ENCODE measurements at regions of chrX and their contacts with region 1.

Region 1: DNA sequence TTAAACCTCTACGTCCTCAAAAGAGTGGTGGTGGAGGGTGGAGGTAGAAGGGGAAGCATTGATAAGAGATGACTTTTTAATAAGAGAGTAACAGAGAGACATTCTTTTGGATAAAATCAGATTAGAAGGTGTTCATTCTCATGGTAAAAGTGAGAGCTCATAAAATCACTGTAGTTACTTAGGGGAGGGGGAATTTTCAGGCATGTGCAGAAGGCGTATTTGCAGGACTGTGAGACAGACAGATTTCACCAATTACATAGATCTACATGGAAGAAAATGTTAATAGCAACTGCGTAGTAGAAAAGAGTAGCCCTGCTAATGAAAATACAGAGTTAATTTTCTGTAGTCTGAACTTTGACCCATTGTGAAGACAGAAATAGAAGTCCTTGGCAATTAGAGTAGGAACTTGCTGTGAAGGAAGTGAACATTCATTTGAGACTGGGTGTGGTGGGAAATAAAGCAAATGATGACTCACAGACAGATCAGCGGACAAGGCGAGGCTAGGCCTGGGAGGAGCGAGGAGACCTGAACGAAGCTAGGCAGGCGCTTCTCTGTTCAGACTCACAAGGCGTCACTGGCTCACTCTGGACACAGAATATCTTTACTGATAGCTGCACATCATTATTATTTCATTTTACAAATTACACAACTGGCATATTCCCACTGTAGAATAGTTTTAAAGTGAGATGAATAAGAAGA is 57.2 kb upstream of the FAM9C start:
- DNase-seq: peak; percentile 72 to 93
- H3K4me3 ChIP-seq: no peak overlapping the region; the same call in 1 of the 2 replicates
- H3K27ac ChIP-seq: peak overlapping the region; percentile 96
- H3K4me1 ChIP-seq: peaks cover 48% of the 10 kb centered on the region
- H3K27me3 ChIP-seq: no peaks in the 10 kb centered on the region
- CTCF ChIP-seq: no peak

Region 2: DNA sequence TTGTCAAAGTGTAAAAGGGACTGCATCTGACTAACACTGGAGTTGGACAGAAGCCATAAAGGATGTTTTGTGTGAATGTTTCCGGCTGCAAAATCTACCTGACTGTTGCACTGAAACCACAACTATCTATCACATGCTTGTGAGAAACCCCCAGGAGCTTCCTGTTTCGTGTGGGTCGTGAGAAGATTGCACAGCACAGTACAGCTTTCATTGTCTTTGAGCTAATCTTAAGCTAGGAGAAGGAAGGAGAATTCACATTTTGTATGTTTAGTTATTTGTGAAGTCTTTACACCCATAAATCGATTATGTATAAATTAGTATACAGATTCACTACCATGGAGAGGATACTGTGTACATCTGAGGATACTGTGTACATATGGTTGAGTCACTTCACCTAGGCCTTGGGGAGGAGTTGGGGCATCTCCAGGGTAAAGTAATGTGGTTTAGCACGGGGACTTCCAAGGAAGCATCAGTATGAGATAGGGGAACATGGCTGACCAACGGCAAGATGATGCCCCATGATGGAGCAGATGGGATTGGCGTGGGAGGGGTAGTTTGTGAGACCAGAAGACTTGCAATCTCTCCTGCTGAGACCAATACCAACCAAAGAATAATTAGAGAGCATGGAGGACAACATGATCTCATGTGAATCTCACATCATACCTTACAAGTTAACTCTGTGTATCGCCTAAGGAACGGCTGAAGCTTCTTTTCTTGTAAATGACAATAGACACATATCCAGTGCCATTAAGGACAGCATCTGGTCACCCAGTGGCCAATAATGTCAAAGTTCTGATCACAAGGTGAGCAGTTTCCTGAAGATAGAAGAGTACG is 14.1 kb before region 1 on chrX:
- CTCF ChIA-PET with region 1: no interaction called
- POLR2A ChIA-PET with region 1: interaction called, 12 read pairs
- intact Hi-C with region 1: no loop called
- DNase-seq: peak; percentile 26 to 62
- H3K4me3 ChIP-seq: no peak overlapping the region
- H3K27ac ChIP-seq: peak overlapping the region; percentile 81
- H3K4me1 ChIP-seq: peaks cover 6% of the 10 kb centered on the region; the same call in 1 of the 2 replicates
- H3K27me3 ChIP-seq: no peaks in the 10 kb centered on the region
- CTCF ChIP-seq: no peak

Region 3: GRCh38 chrX:13194291-13195103 is 92.9 kb after region 1 on chrX:
- CTCF ChIA-PET with region 1: no interaction called
- POLR2A ChIA-PET with region 1: interaction called, 6 read pairs
- intact Hi-C with region 1: loop called (anchors 5 kb)
- DNase-seq: peak in 1 of 2 experiments; percentile 90
- H3K4me3 ChIP-seq: peak overlapping the region; percentile 8; the same call in 1 of the 2 replicates
- H3K27ac ChIP-seq: peak overlapping the region; percentile 93
- H3K4me1 ChIP-seq: peaks cover 74% of the 10 kb centered on the region
- H3K27me3 ChIP-seq: no peaks in the 10 kb centered on the region
- CTCF ChIP-seq: no peak